ENCODE measurements at regions of chr11 and their contacts with region 1.

Region 1: DNA sequence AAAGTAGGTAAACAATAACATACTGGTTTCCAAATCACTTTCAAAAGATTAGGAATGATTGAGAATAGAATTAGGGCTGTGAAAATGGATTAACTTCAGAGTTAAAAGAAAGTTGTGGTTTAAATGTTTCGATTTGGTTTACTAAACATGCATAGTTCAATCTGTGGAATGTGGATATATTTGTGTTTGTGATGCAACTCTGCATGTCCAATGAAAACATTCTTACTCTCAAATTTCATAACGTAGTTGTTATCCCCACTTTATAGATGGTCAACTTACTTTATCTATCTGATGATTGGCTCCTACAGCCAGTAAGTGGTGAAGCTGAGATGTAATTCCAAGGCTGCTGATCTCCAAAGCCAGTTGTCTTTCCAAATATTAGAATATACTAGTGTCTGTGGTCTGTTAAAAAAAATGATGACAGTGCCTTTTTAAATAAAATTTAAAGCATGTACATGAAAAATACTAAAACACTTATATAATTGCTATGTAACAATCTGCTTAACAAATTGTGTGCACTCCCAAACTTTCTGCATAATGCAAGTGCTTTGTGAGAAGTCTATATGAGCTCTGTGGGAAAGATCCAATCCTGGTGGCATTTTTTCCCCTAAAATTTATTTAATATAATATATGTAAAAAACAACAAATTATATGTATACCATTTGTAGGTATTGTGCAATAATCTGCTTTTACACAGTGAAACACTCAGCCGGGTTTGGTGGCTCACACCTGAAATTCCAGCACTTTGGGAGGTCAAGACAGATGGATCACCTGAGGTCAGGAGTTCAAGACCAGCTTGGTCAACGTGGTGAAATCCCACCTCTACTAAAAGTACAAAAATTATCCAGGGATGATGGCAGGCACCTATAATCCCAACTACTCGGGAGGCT is 9.7 kb upstream of the SIK3 start:
- DNase-seq: no peak
- H3K4me3 ChIP-seq: no peak overlapping the region
- H3K27ac ChIP-seq: no peak overlapping the region
- H3K4me1 ChIP-seq: no peaks in the 10 kb centered on the region
- H3K27me3 ChIP-seq: no peaks in the 10 kb centered on the region
- CTCF ChIP-seq: no peak
- POLR2A ChIP-seq: no peak

Region 2: GRCh38 chr11:116595305-116595880 is 512.6 kb before region 1 on chr11:
- CTCF ChIA-PET with region 1: no interaction called
- POLR2A ChIA-PET with region 1: no interaction called
- dilution Hi-C with region 1: no loop called
- intact Hi-C with region 1: no loop called
- DNase-seq: no peak
- H3K4me3 ChIP-seq: no peak overlapping the region
- H3K27ac ChIP-seq: no peak overlapping the region
- H3K4me1 ChIP-seq: no peaks in the 10 kb centered on the region
- H3K27me3 ChIP-seq: peaks cover 0 to 9% of the 10 kb centered on the region in 2 experiments
- CTCF ChIP-seq: no peak
- POLR2A ChIP-seq: no peak

Region 3: GRCh38 chr11:116732271-116733042 is 375.5 kb before region 1 on chr11:
- CTCF ChIA-PET with region 1: interaction called, 23 read pairs
- POLR2A ChIA-PET with region 1: no interaction called
- dilution Hi-C with region 1: no loop called
- intact Hi-C with region 1: loop called (anchors 1 kb)
- DNase-seq: peak; percentile 40
- H3K4me3 ChIP-seq: no peak overlapping the region
- H3K27ac ChIP-seq: no peak overlapping the region
- H3K4me1 ChIP-seq: no peaks in the 10 kb centered on the region
- H3K27me3 ChIP-seq: peaks cover 8 to 15% of the 10 kb centered on the region in 2 experiments
- CTCF ChIP-seq: peak; percentile 78 to 96
- POLR2A ChIP-seq: no peak

Region 4: DNA sequence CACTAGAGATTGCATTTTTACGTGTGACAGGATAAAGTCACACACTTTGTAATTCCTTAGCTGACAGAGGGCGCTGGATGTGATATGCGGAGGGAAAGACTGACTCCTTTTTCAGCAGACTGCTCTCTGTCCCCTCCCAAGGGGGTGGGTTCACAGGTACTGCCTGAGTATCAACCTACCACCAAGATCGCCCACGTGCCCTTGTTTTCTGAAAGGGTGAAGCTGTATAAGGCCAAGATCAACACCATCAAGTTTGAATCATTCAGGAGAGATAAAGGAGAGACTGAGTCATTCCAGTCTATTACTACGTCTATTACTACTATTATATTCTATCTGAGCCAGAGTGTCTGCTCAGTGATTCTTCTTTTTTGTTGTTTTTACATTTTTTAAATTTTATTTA is 365.8 kb before region 1 on chr11:
- CTCF ChIA-PET with region 1: interaction called, 10 read pairs
- POLR2A ChIA-PET with region 1: no interaction called
- dilution Hi-C with region 1: no loop called
- intact Hi-C with region 1: no loop called
- DNase-seq: peak; percentile 34
- H3K4me3 ChIP-seq: no peak overlapping the region
- H3K27ac ChIP-seq: no peak overlapping the region
- H3K4me1 ChIP-seq: peaks cover 11% of the 10 kb centered on the region
- H3K27me3 ChIP-seq: no peaks in the 10 kb centered on the region
- CTCF ChIP-seq: no peak
- POLR2A ChIP-seq: no peak

Region 5: DNA sequence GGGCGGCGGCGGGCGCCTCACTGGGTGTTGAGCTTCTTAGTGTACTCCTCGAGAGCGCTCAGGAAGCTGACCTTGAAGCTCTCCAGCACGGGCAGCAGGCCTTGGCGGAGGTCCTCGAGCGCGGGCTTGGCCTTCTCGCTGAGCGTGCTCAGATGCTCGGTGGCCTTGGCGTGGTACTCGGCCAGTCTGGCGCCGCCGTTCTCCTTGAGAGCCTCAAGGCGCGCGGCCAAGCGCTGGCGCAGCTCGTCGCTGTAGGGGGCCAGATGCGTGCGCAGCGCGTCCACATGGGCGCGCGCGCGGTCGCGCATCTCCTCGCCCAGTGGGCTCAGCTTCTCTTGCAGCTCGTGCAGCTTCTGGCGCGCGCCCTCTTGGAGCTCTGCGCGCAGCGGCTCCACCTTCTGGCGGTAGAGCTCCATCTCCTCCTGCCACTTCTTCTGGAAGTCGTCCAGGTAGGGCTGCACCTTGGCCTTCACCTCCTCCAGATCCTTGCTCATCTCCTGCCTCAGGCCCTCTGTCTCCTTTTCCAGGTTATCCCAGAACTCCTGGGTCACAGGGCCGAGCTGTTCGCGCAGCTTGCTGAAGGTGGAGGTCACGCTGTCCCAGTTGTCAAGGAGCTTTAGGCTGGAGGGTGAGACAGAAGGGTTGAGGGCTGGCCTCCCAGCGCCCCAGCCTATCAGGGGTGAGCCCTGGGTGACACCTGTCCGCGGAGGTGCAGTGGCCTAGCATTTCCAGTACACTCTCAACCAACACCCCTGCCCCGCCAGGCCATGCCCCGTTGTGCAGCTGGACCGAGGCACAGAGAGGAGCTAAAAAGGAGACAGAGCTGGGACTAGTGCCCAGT is 271.9 kb before region 1 on chr11:
- CTCF ChIA-PET with region 1: interaction called, 22 read pairs
- POLR2A ChIA-PET with region 1: no interaction called
- dilution Hi-C with region 1: no loop called
- intact Hi-C with region 1: loop called (anchors 1 kb)
- DNase-seq: peak; percentile 94
- H3K4me3 ChIP-seq: peak overlapping the region; percentile 1 to 32 (median 15)
- H3K27ac ChIP-seq: no peak overlapping the region
- H3K4me1 ChIP-seq: peaks cover 6% of the 10 kb centered on the region
- H3K27me3 ChIP-seq: no peaks in the 10 kb centered on the region
- CTCF ChIP-seq: peak; percentile 56 to 81
- POLR2A ChIP-seq: no peak

Region 6: GRCh38 chr11:116879800-116880625 is 227.9 kb before region 1 on chr11:
- CTCF ChIA-PET with region 1: interaction called, 137 read pairs
- POLR2A ChIA-PET with region 1: no interaction called
- dilution Hi-C with region 1: no loop called
- intact Hi-C with region 1: loop called (anchors 1 kb)
- DNase-seq: peak; percentile 76
- H3K4me3 ChIP-seq: no peak overlapping the region
- H3K27ac ChIP-seq: no peak overlapping the region
- H3K4me1 ChIP-seq: no peaks in the 10 kb centered on the region
- H3K27me3 ChIP-seq: no peaks in the 10 kb centered on the region
- CTCF ChIP-seq: peak; percentile 55 to 68
- POLR2A ChIP-seq: no peak

Region 7: DNA sequence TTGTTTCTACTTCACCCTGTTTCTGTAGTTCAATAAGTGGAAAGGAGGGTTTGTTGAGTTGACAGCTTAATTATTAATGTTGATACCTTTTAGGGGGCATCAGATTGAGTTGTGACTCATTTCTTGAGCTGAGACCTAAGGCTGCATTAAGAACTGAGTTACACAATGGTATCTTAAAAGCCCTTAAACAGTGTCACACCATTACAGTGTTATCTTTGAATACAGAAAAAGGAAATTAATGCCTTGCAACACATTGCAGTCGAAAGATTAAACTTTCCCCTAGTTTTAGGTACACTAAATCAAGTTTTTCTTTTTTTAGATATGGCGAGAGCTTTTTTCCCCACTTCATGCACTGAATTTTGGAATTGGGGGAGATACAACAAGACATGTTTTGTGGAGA is 52.9 kb after region 1 on chr11:
- CTCF ChIA-PET with region 1: no interaction called
- POLR2A ChIA-PET with region 1: no interaction called
- dilution Hi-C with region 1: no loop called
- intact Hi-C with region 1: no loop called
- DNase-seq: peak; percentile 70
- H3K4me3 ChIP-seq: no peak overlapping the region
- H3K27ac ChIP-seq: no peak overlapping the region
- H3K4me1 ChIP-seq: no peaks in the 10 kb centered on the region
- H3K27me3 ChIP-seq: no peaks in the 10 kb centered on the region
- CTCF ChIP-seq: no peak
- POLR2A ChIP-seq: no peak

Region 8: DNA sequence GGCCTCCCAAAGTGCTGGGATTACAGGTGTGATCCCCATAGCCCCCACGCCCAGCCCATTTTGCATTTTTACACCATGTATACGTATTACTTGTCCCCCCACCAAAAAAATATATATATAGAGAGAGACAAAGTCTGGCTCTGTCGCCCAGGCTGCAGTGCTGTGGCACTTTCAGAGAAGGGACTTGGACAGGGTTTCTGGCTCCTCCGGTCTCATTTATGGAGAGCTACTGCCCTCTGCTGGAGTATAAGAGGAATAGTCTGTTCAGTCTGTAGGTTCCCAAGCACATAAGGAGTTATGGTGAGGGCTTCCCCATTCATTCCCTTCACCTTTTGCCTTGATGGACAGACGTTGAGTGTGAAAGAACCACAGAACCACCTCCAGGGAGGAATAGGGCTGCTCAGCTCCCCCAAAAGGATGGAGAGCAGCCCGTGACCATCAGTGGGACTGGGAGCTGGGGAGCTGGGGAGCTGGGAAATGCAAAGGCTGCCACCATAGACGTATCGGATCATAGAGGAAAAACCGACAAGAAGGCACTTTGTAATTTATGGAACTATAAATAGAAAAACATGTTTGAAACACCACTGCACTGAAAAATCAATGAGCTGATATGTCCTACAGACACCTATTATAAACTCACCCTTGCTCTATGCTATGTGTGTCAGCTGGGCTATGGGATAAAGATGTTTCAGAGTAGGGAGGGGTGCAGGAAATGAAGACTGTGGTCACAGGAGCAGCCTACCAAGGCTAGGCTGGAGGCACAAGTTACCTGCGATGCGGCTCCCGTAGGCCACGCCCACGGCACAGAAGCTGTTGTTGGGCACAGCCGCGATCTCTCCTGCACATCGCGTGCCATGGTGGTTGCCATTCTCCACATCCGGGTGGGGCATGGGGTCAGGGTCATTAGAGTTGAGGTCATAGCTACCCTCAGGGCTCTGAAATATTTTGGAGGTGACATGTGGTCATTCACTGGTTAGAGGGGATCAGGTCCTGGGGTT is 118.7 kb after region 1 on chr11:
- CTCF ChIA-PET with region 1: interaction called, 17 read pairs
- POLR2A ChIA-PET with region 1: no interaction called
- dilution Hi-C with region 1: no loop called
- intact Hi-C with region 1: loop called (anchors 2 kb)
- DNase-seq: peak; percentile 73
- H3K4me3 ChIP-seq: no peak overlapping the region
- H3K27ac ChIP-seq: no peak overlapping the region
- H3K4me1 ChIP-seq: peaks cover 10% of the 10 kb centered on the region
- H3K27me3 ChIP-seq: no peaks in the 10 kb centered on the region
- CTCF ChIP-seq: peak; percentile 65 to 76
- POLR2A ChIP-seq: no peak

Region 9: GRCh38 chr11:118744046-118744445 is 1636.1 kb after region 1 on chr11:
- CTCF ChIA-PET with region 1: no interaction called
- POLR2A ChIA-PET with region 1: no interaction called
- dilution Hi-C with region 1: no loop called
- intact Hi-C with region 1: no loop called
- DNase-seq: no peak
- H3K4me3 ChIP-seq: no peak overlapping the region
- H3K27ac ChIP-seq: no peak overlapping the region
- H3K4me1 ChIP-seq: no peaks in the 10 kb centered on the region
- H3K27me3 ChIP-seq: peaks cover under 1 to 2% of the 10 kb centered on the region in 2 experiments
- CTCF ChIP-seq: no peak
- POLR2A ChIP-seq: no peak

Measured in endothelial cell of umbilical vein (primary cell).